GM12878 (cell line): ENCODE measurements at regions of chr20 and their contacts with region 1.

Region 1: GRCh38 chr20:11315525-11315924 is 602.2 kb upstream of the BTBD3 start:
- DNase-seq: no peak
- ATAC-seq: no peak; the same call in 2 of the 3 replicates
- H3K4me3 ChIP-seq: no peak overlapping the region
- H3K27ac ChIP-seq: no peak overlapping the region
- H3K4me1 ChIP-seq: no peaks in the 10 kb centered on the region
- H3K27me3 ChIP-seq: no peaks in the 10 kb centered on the region
- CTCF ChIP-seq: no peak
- EP300 ChIP-seq: no peak
- POLR2A ChIP-seq: no peak
- RAD21 ChIP-seq: no peak

Region 2: GRCh38 chr20:11302436-11302835 is 13.1 kb before region 1 on chr20:
- CTCF ChIA-PET with region 1: interaction called, 5 read pairs
- POLR2A ChIA-PET with region 1: no interaction called
- RAD21 ChIA-PET with region 1: no interaction called
- SMC1A ChIA-PET with region 1: interaction called, 10 read pairs
- in situ Hi-C with region 1: no loop called
- intact Hi-C with region 1: no loop called
- DNase-seq: no peak
- ATAC-seq: peak; percentile 19; the same call in 1 of the 3 replicates
- H3K4me3 ChIP-seq: no peak overlapping the region
- H3K27ac ChIP-seq: no peak overlapping the region
- H3K4me1 ChIP-seq: no peaks in the 10 kb centered on the region
- H3K27me3 ChIP-seq: no peaks in the 10 kb centered on the region
- CTCF ChIP-seq: no peak
- EP300 ChIP-seq: no peak
- POLR2A ChIP-seq: no peak
- RAD21 ChIP-seq: no peak

Region 3: DNA sequence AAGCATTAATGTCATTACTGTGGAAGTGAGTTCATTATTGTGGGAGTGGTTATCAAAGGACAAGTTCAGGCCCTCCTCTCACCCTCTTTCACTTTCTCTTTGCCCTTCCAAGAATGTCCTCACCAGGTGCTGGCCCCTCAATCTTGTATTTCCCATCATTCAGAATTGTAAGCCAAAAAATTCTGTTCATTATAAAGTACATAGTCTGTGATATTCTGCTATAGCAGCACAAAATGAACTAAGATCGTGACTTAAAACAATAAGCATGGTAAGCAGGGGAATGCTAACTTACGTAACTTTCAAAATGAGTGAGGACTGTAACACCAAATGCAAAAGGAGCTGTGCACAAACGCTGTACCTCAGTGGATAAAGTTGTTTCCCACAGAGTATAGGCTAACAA is 86.5 kb after region 1 on chr20:
- CTCF ChIA-PET with region 1: no interaction called
- POLR2A ChIA-PET with region 1: no interaction called
- RAD21 ChIA-PET with region 1: no interaction called
- SMC1A ChIA-PET with region 1: no interaction called
- in situ Hi-C with region 1: no loop called
- intact Hi-C with region 1: no loop called
- DNase-seq: peak; percentile 27
- ATAC-seq: peak; percentile 93
- H3K4me3 ChIP-seq: peak overlapping the region; percentile 28; the same call in 1 of the 2 replicates
- H3K27ac ChIP-seq: no peak overlapping the region
- H3K4me1 ChIP-seq: no peaks in the 10 kb centered on the region
- H3K27me3 ChIP-seq: no peaks in the 10 kb centered on the region
- CTCF ChIP-seq: no peak
- EP300 ChIP-seq: no peak
- POLR2A ChIP-seq: no peak
- RAD21 ChIP-seq: no peak